ENCODE measurements at regions of chr10 and their contacts with region 1.

Region 1: DNA sequence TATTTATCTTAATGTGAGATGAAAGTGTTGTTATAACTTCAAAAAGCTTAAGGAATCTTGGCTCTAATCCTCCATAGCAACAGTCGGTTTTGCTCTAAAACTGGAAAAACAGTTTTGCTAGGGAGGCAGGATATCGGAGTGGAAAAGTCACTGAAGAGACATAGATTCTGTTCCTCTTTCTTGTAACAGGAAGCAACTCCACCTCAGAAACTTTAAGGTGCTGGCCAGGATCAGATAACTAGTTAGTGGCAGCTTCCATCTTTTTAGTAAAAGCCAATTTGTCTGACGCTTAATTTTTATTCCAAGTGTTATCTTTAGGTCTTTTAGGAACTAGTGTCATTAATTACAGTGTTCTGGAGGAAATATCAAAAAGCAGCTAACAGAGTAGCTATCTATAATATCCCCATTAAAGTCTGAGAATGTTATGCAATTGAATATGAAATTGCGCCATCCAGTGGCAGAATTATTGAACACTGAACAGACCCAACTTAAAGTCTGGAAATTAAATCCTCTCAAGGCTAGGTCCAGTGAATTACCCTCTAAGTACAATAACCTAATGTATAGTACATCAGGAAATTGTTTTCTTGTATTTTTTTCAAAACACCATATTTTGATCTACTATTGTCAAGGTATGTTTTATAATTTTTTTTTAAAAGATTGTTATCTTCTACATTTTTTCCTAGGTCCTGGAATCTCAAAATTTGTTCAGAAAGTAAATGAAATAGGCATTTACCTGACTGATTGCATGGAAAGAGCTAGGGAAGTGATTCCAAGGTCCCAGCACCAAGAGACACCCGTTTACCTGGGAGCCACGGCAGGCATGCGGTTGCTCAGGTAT is 65.9 kb upstream of the CC2D2B start:
- DNase-seq: peak; percentile 26
- CTCF ChIP-seq: peak; percentile 70

Region 2: GRCh38 chr10:95308389-95309302 is 533.2 kb before region 1 on chr10:
- in situ Hi-C with region 1: no loop called
- DNase-seq: no peak
- CTCF ChIP-seq: no peak

Region 3: GRCh38 chr10:95697429-95697828 is 144.5 kb before region 1 on chr10:
- in situ Hi-C with region 1: loop called (anchors 5 kb)
- DNase-seq: no peak
- CTCF ChIP-seq: no peak

Region 4: DNA sequence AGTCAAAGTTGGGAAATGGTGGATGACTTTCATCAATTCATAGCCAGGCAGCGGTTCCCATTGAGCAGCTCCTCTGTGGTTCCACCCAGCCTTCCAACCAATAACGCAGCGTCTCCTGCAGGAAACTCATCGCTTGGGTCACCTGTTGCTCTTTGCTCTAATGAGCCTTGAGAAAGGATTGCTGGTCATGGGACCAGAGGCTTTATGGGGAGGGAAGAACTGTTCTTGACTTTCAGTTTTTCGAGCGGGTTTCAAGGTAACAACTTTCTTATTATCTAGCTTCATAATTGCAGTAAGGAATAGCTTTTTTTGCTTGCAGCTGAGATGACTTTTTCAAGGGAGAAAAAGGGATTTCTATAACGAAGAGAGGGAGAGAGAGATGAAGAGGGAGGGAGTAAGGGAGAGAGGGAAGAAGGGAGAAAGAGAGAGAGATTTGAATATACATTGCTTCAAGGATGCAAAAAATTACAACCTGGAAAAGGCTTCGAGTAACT is 86.3 kb before region 1 on chr10:
- in situ Hi-C with region 1: loop called (anchors 10 kb)
- DNase-seq: peak; percentile 59
- CTCF ChIP-seq: no peak

Region 5: DNA sequence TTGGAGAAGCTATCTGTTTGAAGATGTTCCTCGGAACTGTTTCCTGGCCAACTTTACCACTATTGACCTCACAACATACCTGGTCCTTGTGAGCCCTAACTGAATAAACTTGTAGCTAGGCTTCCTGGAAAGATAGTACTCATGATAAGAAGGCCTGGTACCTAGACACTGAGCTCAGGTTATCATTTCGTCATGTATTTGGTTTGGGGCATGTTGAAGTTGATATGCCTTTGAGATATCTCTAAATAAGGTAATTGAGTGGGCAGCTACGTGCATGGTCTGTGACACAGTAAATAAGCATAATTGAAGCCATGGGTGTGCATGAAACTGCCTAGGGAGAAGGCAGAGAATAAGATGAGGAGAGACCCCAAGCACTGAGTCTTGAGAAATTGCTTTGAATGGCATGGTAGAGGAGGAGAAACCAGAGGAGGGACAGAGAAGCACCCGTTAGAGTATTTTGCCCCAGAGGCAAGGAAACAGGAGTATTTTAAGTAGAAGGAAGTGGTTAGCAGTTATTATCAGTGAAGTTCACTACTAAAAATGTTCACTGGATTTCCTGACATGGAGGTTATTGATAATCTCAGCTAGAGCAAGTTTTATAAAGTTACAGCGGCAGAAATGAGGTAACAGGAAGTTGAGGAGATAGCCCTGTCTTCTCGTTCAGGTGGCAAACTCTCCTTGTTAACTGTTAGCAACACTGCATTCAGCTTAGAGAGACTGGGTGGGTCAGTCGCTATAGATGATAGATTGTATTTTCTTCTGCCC is 121.5 kb after region 1 on chr10:
- in situ Hi-C with region 1: no loop called
- DNase-seq: no peak
- CTCF ChIP-seq: no peak

Measured in GM13977 (cell line).